Activated T-helper 2 cell treated with anti-CD3 and anti-CD28 coated beads, Interferon-gamma antibody, Interleukin-2, Interleukin-4, amounts not matched to agents 10 μg/mL and 5 μg/mL and 100 μg/mL, durations not matched to agents 14 hours and 24 hours and 36 hours (primary cell): ENCODE measurements at regions of chr20 and their contacts with region 1.

Region 1: DNA sequence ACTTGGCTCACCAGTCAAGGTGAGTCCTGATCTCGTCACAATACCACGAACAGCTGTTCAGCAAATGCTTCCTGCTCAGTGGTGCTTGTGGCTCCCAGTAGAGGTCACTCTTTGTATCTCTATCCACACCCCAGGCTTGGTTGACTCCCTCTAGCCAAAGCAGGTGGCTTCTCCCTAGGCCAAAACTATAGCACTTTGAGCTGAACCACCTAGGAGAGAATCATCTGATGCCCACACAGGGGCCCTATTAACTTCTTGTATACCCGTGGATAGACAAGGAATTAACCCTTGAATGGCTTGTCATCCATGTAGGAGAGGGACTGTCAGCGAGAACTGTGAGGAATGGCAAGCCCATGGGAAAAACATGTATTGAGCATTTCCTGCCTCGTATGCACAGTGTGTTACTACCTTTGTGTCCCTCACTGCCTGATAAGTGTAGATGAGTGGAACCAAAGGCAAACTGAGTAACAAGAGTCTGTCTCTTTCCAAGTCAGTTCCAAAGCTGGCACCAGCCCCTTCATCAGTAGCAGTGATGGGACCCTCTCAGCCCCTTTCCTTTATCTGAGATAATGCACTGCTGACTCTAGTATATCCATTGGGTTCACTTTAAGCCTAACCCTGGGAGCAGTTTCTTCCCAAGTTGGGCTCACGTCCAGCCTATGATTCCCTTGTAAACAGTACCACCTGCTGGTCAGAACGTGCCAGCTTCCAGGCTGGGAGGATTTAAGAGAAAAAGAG is 42.5 kb downstream of the EIF2S2 start:
- DNase-seq: peak; percentile 37
- H3K4me3 Mint-ChIP-seq: no peak overlapping the region
- H3K27ac Mint-ChIP-seq: no peak overlapping the region
- H3K4me1 Mint-ChIP-seq: peaks cover 24% of the 10 kb centered on the region
- H3K27me3 Mint-ChIP-seq: no peaks in the 10 kb centered on the region

Region 2: GRCh38 chr20:33933469-33933909 is 136.0 kb before region 1 on chr20:
- intact Hi-C with region 1: loop called (anchors 1 kb)
- DNase-seq: peak; percentile 42
- H3K4me3 Mint-ChIP-seq: no peak overlapping the region
- H3K27ac Mint-ChIP-seq: no peak overlapping the region
- H3K4me1 Mint-ChIP-seq: peaks cover 2% of the 10 kb centered on the region
- H3K27me3 Mint-ChIP-seq: peaks cover 2% of the 10 kb centered on the region

Region 3: DNA sequence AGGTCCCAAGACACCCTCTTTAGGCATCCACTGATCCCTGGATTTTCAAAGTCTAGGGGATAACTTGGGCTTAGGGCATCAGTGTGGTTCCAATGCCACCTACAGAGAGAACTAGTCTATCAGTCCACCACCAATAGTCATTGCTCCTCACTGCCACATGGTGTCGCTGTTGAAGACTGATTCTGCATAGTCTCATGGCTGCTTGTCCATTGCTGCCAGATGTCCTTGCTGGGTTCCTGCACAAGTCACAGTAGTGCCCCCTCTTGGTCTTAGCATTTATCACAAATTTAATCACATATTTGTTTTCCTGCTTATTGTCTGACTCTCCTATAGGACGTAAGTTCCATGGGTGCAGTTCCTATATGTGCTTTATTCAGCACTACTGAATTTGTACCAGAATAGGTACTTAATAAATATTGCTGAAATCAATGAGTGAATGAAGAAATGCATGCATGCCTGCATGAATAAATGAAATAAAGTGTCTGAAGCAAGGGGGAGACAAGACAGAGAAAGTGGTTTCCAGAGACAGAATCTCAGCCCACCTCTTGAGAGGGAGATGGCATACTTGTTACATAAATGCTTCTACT is 121.7 kb before region 1 on chr20:
- intact Hi-C with region 1: loop called (anchors 2 kb)
- DNase-seq: peak; percentile 30
- H3K4me3 Mint-ChIP-seq: no peak overlapping the region
- H3K27ac Mint-ChIP-seq: no peak overlapping the region
- H3K4me1 Mint-ChIP-seq: no peaks in the 10 kb centered on the region
- H3K27me3 Mint-ChIP-seq: peaks cover 6% of the 10 kb centered on the region

Region 4: GRCh38 chr20:34111702-34112599 is 42.4 kb after region 1 on chr20 and contains the start of gene EIF2S2:
- intact Hi-C with region 1: no loop called
- DNase-seq: peak; percentile 95
- H3K4me3 Mint-ChIP-seq: peak within 1 kb of the TSS; percentile 96
- H3K27ac Mint-ChIP-seq: peak within 1 kb of the TSS; percentile 97
- H3K4me1 Mint-ChIP-seq: peaks cover 36% of the 10 kb centered on the region
- H3K27me3 Mint-ChIP-seq: peaks cover 5% of the 10 kb centered on the region
- total RNA-seq, gene EIF2S2: 96.0 and 97.6 TPM in 2 replicates